Naive thymus-derived CD8-positive, alpha-beta T cell (primary cell): ENCODE measurements at regions of chr15 and their contacts with region 1.

Region 1: GRCh38 chr15:65610871-65611718 is at the start of gene INTS14:
- DNase-seq: peak; percentile 83 to 91 (median 86)
- ATAC-seq: peak; percentile 95
- H3K4me3 Mint-ChIP-seq: peak within 1 kb of the TSS; percentile 92 to 99 (median 97)
- H3K27ac Mint-ChIP-seq: peak within 1 kb of the TSS; percentile 94 to 100 (median 98)
- H3K4me1 Mint-ChIP-seq: peaks cover 15 to 49% (median 42%) of the 10 kb centered on the region in 4 donors
- H3K27me3 Mint-ChIP-seq: no peaks in the 10 kb centered on the region
- polyA plus RNA-seq, gene INTS14: 20.4 to 30.3 (median 24.0) TPM

Region 2: DNA sequence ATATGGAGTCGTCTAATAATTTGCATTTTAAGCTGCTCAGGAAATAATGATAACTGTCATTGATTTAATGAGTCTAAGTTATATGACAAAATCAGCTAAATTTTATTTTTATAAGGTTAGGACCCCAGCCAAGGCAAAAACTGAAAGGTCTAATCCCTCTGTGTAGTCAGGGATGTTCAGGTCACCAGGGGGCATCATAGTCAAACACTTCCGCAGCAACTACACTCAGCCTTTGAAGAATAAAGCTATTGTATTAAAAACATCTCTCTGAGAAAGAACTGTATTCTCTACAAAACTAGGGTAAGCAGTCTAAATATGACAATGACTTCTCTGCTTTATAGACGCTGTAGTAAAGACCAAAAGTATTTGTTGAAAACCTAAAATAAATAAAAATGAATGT is 15.1 kb before region 1 on chr15:
- POLR2A ChIA-PET with region 1: interaction called, 11 read pairs
- DNase-seq: peak in 3 of 10 donors; percentile 12 to 32 (median 22)
- ATAC-seq: no peak
- H3K4me3 Mint-ChIP-seq: no peak overlapping the region
- H3K27ac Mint-ChIP-seq: peak overlapping the region in 1 of 10 donors; percentile 49
- H3K4me1 Mint-ChIP-seq: peaks cover 0 to 2% (median 0%) of the 10 kb centered on the region in 4 donors
- H3K27me3 Mint-ChIP-seq: no peaks in the 10 kb centered on the region

Region 3: GRCh38 chr15:65646486-65646885 is 35.4 kb after region 1 on chr15:
- POLR2A ChIA-PET with region 1: no interaction called
- DNase-seq: no peak
- ATAC-seq: no peak
- H3K4me3 Mint-ChIP-seq: no peak overlapping the region
- H3K27ac Mint-ChIP-seq: peak overlapping the region in 2 of 10 donors; percentile 43 to 48
- H3K4me1 Mint-ChIP-seq: peaks cover 0 to 4% (median 1%) of the 10 kb centered on the region in 4 donors
- H3K27me3 Mint-ChIP-seq: no peaks in the 10 kb centered on the region